ENCODE measurements at regions of chr20 and their contacts with region 1.

Region 1: GRCh38 chr20:35303735-35304491 is 11.7 kb upstream of the FAM83C start:
- DNase-seq: peak; percentile 68 to 87 (median 75)
- H3K4me3 ChIP-seq: no peak overlapping the region
- H3K4me3 Mint-ChIP-seq: no peak overlapping the region
- H3K27ac ChIP-seq: no peak overlapping the region
- H3K27ac Mint-ChIP-seq: peak overlapping the region in 5 of 8 donors; percentile 26 to 85 (median 41)
- H3K4me1 ChIP-seq: peaks cover 8% of the 10 kb centered on the region
- H3K4me1 Mint-ChIP-seq: peaks cover 5 to 15% (median 9%) of the 10 kb centered on the region in 3 donors
- H3K27me3 ChIP-seq: no peaks in the 10 kb centered on the region
- H3K27me3 Mint-ChIP-seq: no peaks in the 10 kb centered on the region

Region 2: GRCh38 chr20:35284267-35284991 is 19.5 kb before region 1 on chr20 and contains the start of gene EIF6:
- CTCF ChIA-PET with region 1: interaction called, 13 read pairs
- POLR2A ChIA-PET with region 1: no interaction called
- DNase-seq: peak; percentile 53 to 77 (median 61)
- H3K4me3 ChIP-seq: peak within 1 kb of the TSS; percentile 72
- H3K4me3 Mint-ChIP-seq: peak within 1 kb of the TSS; percentile 87 to 98 (median 96)
- H3K27ac ChIP-seq: peak within 1 kb of the TSS; percentile 75
- H3K27ac Mint-ChIP-seq: peak within 1 kb of the TSS; percentile 84 to 99 (median 92)
- H3K4me1 ChIP-seq: peaks cover 14% of the 10 kb centered on the region
- H3K4me1 Mint-ChIP-seq: peaks cover 28 to 41% (median 32%) of the 10 kb centered on the region in 3 donors
- H3K27me3 ChIP-seq: no peaks in the 10 kb centered on the region
- H3K27me3 Mint-ChIP-seq: peaks cover 0 to 1% of the 10 kb centered on the region in 2 donors
- total RNA-seq, gene EIF6: 204 to 207 TPM

Region 3: GRCh38 chr20:35447082-35447789 is 143.3 kb after region 1 on chr20:
- CTCF ChIA-PET with region 1: interaction called, 22 read pairs
- POLR2A ChIA-PET with region 1: no interaction called
- DNase-seq: peak; percentile 77 to 88 (median 86)
- H3K4me3 ChIP-seq: no peak overlapping the region
- H3K4me3 Mint-ChIP-seq: peak overlapping the region; percentile 65 to 95 (median 86)
- H3K27ac ChIP-seq: no peak overlapping the region
- H3K27ac Mint-ChIP-seq: peak overlapping the region in 4 of 8 donors; percentile 18 to 67 (median 48)
- H3K4me1 ChIP-seq: no peaks in the 10 kb centered on the region
- H3K4me1 Mint-ChIP-seq: peaks cover 0 to 8% (median 6%) of the 10 kb centered on the region in 3 donors
- H3K27me3 ChIP-seq: no peaks in the 10 kb centered on the region
- H3K27me3 Mint-ChIP-seq: peaks cover 4 to 8% of the 10 kb centered on the region in 2 donors

Measured in CD8-positive, alpha-beta memory T cell (primary cell).